Calu3 (cell line): ENCODE measurements at regions of chr20 and their contacts with region 1.

Region 1: GRCh38 chr20:38875175-38875993 is 50.8 kb upstream of the FAM83D start:
- DNase-seq: no peak
- H3K4me3 Mint-ChIP-seq: no peak overlapping the region
- H3K27ac Mint-ChIP-seq: no peak overlapping the region
- H3K4me1 Mint-ChIP-seq: peaks cover 22% of the 10 kb centered on the region
- H3K27me3 Mint-ChIP-seq: peaks cover 28% of the 10 kb centered on the region
- CTCF ChIP-seq: no peak

Region 2: GRCh38 chr20:38764567-38765355 is 110.6 kb before region 1 on chr20:
- CTCF ChIA-PET with region 1: no interaction called
- intact Hi-C with region 1: loop called (anchors 10 kb)
- DNase-seq: peak; percentile 88
- H3K4me3 Mint-ChIP-seq: peak overlapping the region; percentile 9
- H3K27ac Mint-ChIP-seq: peak overlapping the region; percentile 62
- H3K4me1 Mint-ChIP-seq: peaks cover 21% of the 10 kb centered on the region
- H3K27me3 Mint-ChIP-seq: no peaks in the 10 kb centered on the region
- CTCF ChIP-seq: no peak

Region 3: DNA sequence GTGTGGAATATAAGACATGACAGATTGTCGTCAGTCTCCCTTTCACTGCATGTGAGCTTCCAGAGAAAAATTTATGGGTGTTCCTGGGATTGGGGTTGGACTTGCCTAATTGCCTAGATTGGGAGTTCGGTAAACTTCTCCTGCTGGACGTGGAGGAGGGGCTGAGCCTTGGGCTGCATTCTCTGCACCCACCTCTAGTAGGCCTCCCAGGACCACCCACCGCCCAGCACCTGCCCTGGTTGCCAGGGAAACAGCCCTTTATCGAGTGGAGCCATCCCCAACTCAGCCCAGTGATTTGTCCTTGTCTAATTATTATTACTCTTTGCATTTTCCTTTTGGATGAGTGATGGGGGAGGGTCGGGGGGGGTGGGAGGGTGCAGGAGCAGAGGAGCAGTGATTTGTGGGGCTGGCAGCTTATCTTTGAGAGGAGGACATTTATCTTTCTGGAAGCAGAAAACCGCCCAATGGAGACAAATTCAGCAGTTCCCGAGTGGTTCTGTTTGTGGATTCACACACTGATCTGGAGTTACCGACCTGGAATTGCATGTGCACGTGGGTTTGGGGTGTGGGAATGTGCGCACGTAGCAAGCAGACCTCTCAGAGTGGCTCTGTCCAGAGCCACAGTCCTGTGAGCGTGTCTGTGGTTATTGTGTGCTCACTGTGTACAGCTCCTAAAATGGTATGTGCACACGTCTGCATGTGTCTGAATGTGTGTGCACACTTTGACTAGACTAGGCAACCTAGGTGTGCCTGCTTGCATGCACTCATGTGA is 191.3 kb after region 1 on chr20:
- CTCF ChIA-PET with region 1: no interaction called
- intact Hi-C with region 1: no loop called
- DNase-seq: no peak
- H3K4me3 Mint-ChIP-seq: no peak overlapping the region
- H3K27ac Mint-ChIP-seq: no peak overlapping the region
- H3K4me1 Mint-ChIP-seq: no peaks in the 10 kb centered on the region
- H3K27me3 Mint-ChIP-seq: peaks cover 68% of the 10 kb centered on the region
- CTCF ChIP-seq: no peak

Region 4: GRCh38 chr20:39289316-39289715 is 413.9 kb after region 1 on chr20:
- CTCF ChIA-PET with region 1: no interaction called
- intact Hi-C with region 1: no loop called
- DNase-seq: peak; percentile 13
- H3K4me3 Mint-ChIP-seq: no peak overlapping the region
- H3K27ac Mint-ChIP-seq: no peak overlapping the region
- H3K4me1 Mint-ChIP-seq: no peaks in the 10 kb centered on the region
- H3K27me3 Mint-ChIP-seq: peaks cover 40% of the 10 kb centered on the region
- CTCF ChIP-seq: no peak